ENCODE measurements at regions of chr12 and their contacts with region 1.

Region 1: DNA sequence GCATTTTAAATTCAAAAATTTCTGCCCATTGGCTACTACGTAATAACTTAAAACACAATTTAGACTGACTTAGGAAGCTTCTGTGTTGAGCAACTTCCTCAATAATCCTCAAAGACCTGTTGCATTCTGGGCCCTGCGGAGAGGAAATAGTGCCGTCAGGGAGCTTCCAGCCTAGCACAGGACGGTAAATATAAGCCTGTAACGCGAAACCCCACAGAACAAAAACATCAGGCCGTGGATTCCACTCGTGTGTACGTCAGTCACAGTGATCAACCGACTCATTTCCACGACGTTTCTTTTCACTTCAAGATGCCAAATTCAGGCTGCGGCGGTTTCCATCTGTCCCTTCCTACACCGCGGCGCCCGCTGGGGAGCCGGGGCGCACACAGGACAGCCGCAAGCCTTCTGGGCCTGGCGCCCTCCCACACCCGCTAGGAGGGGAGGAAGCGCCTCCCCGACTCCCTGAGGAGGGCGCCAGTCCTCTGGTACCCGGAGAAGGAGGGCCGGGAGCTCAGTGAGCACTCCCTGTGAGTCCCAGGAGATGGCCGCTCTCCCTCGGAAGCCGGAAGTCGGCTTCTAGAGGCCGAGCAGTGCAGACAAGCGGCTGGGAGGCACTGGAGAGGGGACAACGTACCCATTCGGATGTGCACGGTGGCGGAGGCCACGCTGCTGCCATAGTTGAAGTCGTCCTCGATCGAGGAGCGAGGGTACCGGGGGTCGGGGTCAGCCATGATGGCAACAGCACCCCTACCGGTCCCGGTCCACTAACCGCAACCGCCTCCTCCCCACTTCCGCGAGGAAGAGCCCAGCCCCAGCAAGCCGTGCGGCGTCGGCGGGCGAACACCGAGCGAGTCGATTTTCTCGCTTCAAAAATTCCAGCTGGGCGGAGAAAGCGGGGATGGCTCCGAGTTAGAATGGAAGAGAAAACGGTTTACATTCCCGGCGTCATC is at the start of gene TMBIM4:
- DNase-seq: peak; percentile 86
- H3K4me3 Mint-ChIP-seq: peak within 1 kb of the TSS; percentile 98
- H3K27ac Mint-ChIP-seq: peak within 1 kb of the TSS; percentile 98
- H3K4me1 Mint-ChIP-seq: peaks cover 20% of the 10 kb centered on the region
- H3K27me3 Mint-ChIP-seq: no peaks in the 10 kb centered on the region
- CTCF ChIP-seq: peak; percentile 61
- total RNA-seq, gene TMBIM4: 58.5 and 74.3 TPM in 2 replicates

Region 2: DNA sequence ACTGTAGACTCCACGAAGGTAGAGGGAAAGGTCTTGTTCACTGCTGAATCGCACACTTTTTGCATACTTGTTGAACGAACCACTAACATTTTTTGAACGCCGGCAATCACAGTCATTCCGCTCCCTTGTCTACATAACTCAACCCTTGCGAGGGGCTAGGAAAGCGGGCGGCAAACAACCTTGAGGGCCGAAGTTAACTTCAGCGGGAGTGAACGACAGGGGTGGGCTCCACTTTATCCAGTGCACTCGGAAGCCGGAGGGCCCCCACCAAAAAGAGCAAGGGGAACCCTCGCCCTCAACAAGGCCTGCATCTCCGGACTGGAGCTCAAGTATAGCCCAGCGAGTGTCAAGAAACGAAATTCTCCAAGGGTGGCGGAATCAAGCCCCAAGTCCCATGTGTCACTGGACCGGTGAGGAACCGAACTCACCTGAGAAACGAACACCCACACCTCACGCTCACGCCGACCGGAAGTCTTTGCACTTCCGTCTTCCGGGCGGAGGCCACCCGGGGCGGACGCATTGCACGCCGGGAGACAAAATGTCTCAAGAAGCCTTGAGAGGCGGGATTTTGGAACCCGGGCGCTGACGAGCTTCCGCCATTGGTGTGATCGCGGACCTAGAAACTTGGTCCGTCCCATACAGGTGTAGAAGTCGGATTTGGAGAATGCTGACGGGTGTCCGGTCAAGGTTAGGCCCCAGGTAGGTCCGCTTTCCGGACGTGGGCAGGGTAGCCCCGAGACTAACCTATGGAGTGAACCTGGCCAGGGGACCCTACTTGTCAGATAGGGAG is 39.0 kb before region 1 on chr12 and contains the start of gene LLPH:
- CTCF ChIA-PET with region 1: interaction called, 5 read pairs
- POLR2A ChIA-PET with region 1: interaction called, 70 read pairs
- intact Hi-C with region 1: no loop called
- DNase-seq: peak; percentile 93
- H3K4me3 Mint-ChIP-seq: peak within 1 kb of the TSS; percentile 90
- H3K27ac Mint-ChIP-seq: peak within 1 kb of the TSS; percentile 89
- H3K4me1 Mint-ChIP-seq: peaks cover 35% of the 10 kb centered on the region
- H3K27me3 Mint-ChIP-seq: no peaks in the 10 kb centered on the region
- CTCF ChIP-seq: no peak
- total RNA-seq, gene LLPH: 43.8 and 44.3 TPM in 2 replicates

Region 3: GRCh38 chr12:66144791-66145754 is 24.4 kb before region 1 on chr12:
- CTCF ChIA-PET with region 1: interaction called, 10 read pairs
- POLR2A ChIA-PET with region 1: interaction called, 17 read pairs
- intact Hi-C with region 1: no loop called
- DNase-seq: peak; percentile 84
- H3K4me3 Mint-ChIP-seq: no peak overlapping the region
- H3K27ac Mint-ChIP-seq: peak overlapping the region; percentile 82
- H3K4me1 Mint-ChIP-seq: peaks cover 8% of the 10 kb centered on the region
- H3K27me3 Mint-ChIP-seq: no peaks in the 10 kb centered on the region
- CTCF ChIP-seq: peak; percentile 59

Region 4: GRCh38 chr12:66152732-66153131 is 16.8 kb before region 1 on chr12:
- CTCF ChIA-PET with region 1: interaction called, 10 read pairs
- POLR2A ChIA-PET with region 1: interaction called, 19 read pairs
- intact Hi-C with region 1: no loop called
- DNase-seq: no peak
- H3K4me3 Mint-ChIP-seq: no peak overlapping the region
- H3K27ac Mint-ChIP-seq: no peak overlapping the region
- H3K4me1 Mint-ChIP-seq: peaks cover 13% of the 10 kb centered on the region
- H3K27me3 Mint-ChIP-seq: no peaks in the 10 kb centered on the region
- CTCF ChIP-seq: no peak

Region 5: DNA sequence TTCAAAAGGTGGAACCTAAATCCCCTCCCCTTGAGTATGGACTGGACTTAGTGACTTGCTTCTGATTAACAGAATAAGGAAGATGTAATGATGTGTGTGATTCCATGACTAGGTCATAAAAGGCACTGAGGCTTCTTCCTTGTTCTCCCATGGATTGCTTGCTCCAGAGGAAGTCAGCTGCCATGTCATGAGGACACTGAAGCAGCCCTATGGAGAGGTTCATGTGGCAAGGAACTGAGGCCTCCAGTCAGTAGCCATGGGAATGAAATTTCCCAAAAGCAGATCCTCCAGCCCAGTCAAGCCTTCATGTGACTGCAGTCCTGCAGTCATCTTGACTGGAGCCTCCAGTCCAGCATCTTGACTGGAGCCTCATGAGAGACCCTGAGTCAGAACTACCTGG is 10.4 kb before region 1 on chr12:
- CTCF ChIA-PET with region 1: interaction called, 13 read pairs
- POLR2A ChIA-PET with region 1: interaction called, 19 read pairs
- intact Hi-C with region 1: no loop called
- DNase-seq: no peak
- H3K4me3 Mint-ChIP-seq: no peak overlapping the region
- H3K27ac Mint-ChIP-seq: no peak overlapping the region
- H3K4me1 Mint-ChIP-seq: peaks cover 13% of the 10 kb centered on the region
- H3K27me3 Mint-ChIP-seq: no peaks in the 10 kb centered on the region
- CTCF ChIP-seq: no peak

Region 6: DNA sequence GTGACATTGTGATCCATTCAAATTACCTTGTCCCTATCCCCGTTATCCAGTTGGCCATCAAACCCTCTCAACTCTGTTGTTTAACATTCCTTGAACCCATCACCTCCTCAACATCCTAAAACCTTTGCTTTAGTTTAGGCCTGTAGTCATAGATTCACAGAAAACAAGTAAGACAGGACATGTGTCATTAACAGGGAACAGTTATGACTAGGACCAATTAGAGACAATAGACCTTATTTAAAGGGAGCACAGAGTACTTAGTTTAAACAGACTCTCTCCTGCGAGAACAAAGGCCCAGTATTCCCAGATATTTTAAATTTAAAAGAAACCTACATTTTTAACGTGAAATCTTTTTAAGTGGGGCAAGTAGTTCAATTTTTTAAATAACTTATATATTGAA is 112.7 kb after region 1 on chr12:
- CTCF ChIA-PET with region 1: no interaction called
- POLR2A ChIA-PET with region 1: no interaction called
- intact Hi-C with region 1: no loop called
- DNase-seq: no peak
- H3K4me3 Mint-ChIP-seq: no peak overlapping the region
- H3K27ac Mint-ChIP-seq: no peak overlapping the region
- H3K4me1 Mint-ChIP-seq: no peaks in the 10 kb centered on the region
- H3K27me3 Mint-ChIP-seq: peaks cover 24% of the 10 kb centered on the region
- CTCF ChIP-seq: no peak

Region 7: DNA sequence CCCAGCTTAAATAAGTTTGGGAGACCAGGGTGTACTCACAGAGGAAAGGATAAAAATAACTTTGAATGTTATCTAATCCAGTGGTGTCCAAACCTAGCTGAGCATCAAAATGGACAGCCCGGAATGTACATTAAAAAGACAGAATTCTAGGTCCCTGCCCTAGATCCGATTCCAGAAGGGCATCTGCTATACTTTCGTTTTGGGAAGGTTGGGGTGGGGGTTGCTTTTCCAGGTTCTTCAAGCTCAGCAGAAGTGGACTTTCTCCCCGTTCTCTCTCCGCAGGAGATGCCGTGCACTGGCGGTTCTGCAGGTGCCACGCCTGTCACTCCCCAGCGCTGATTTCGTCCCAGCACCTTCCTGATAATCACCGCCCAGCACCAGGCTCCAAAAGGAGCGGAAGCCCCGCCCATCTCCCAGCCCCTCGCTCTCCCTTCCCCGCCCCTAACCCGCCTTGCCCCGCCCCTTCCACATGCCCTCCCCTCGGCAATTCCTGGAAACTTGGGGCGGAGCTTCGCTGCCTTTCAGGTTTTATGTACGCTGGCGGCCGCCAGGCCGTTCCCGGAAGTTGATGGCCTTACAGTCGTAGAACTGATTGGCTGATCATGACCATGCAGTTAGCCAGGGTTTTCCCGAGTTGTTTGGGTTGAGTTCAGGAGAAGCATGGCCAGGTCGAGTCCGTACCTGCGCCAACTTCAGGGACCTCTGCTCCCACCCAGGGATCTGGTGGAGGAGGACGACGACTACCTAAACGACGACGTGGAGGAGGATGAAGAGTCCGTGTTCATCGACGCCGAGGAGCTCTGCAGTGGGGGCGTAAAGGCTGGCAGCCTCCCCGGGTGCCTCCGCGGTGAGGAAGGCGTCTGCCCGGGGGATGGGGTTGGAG is 132.7 kb after region 1 on chr12 and contains the start of gene HELB:
- CTCF ChIA-PET with region 1: interaction called, 6 read pairs
- POLR2A ChIA-PET with region 1: interaction called, 22 read pairs
- intact Hi-C with region 1: loop called (anchors 1 kb)
- DNase-seq: peak; percentile 98
- H3K4me3 Mint-ChIP-seq: peak within 1 kb of the TSS; percentile 99
- H3K27ac Mint-ChIP-seq: peak within 1 kb of the TSS; percentile 90
- H3K4me1 Mint-ChIP-seq: peaks cover 23% of the 10 kb centered on the region
- H3K27me3 Mint-ChIP-seq: peaks cover 45% of the 10 kb centered on the region
- CTCF ChIP-seq: no peak
- total RNA-seq, gene HELB: 2.6 TPM in 2 replicates

Region 8: DNA sequence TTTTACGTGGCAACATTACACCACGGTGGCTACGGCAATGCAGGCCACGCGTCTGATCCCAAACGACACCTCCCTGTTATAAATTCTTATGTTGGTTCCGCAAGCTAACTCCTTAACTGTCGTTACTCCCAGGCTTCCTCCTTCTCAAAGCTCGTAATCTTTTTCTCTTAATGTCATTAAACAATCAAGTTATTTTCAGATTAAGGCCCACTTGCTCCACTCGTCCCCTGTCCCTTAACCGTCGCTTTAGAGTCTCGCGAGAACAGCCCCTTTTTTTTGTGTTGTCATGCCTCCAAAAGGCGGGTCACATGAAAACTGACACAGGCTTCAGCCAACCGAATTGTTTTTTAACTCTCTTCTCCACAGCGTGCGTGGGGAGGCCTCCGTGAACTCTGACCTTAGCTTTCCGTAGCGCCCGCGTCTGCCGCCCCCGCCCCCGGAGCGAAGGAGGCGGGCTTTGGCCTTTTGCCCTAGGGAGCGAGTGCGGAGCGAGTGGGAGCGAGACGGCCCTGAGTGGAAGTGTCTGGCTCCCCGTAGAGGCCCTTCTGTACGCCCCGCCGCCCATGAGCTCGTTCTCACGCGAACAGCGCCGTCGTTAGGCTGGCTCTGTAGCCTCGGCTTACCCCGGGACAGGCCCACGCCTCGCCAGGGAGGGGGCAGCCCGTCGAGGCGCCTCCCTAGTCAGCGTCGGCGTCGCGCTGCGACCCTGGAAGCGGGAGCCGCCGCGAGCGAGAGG is 1099.6 kb after region 1 on chr12 and contains the start of gene CAND1:
- CTCF ChIA-PET with region 1: no interaction called
- POLR2A ChIA-PET with region 1: interaction called, 10 read pairs
- intact Hi-C with region 1: no loop called
- DNase-seq: peak; percentile 99
- H3K4me3 Mint-ChIP-seq: peak within 1 kb of the TSS; percentile 77
- H3K27ac Mint-ChIP-seq: peak within 1 kb of the TSS; percentile 99
- H3K4me1 Mint-ChIP-seq: peaks cover 14% of the 10 kb centered on the region
- H3K27me3 Mint-ChIP-seq: no peaks in the 10 kb centered on the region
- CTCF ChIP-seq: no peak
- total RNA-seq, gene CAND1: 149 and 160 TPM in 2 replicates

Measured in MCF 10A (cell line).